MCF 10A (cell line): ENCODE measurements at regions of chr12 and their contacts with region 1.

Region 1: GRCh38 chr12:93766796-93767523 is 89.8 kb downstream of the CRADD start:
- DNase-seq: peak; percentile 77
- H3K4me3 Mint-ChIP-seq: no peak overlapping the region
- H3K27ac Mint-ChIP-seq: no peak overlapping the region
- H3K4me1 Mint-ChIP-seq: peaks cover 26% of the 10 kb centered on the region
- H3K27me3 Mint-ChIP-seq: no peaks in the 10 kb centered on the region
- CTCF ChIP-seq: peak; percentile 57

Region 2: DNA sequence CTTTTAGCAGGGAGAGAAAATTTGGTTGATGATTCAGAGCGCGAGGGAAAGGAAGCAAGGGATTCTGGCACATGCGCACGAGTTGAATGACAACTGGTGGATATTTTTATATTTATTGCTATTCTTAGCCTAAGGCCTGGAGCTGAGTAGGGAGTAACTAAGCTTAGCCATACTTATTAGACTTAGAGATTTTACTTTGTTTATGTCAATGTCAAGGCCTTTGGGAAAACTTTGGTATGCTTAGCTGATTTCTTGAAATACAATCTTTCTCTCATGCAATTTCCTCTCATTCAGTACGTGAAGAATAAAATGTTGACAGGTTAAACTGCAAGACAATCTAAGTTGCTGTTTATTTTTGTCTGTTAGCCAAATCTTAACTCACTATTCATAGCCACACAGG is 11.3 kb after region 1 on chr12:
- CTCF ChIA-PET with region 1: interaction called, 11 read pairs
- POLR2A ChIA-PET with region 1: interaction called, 6 read pairs
- intact Hi-C with region 1: no loop called
- DNase-seq: peak; percentile 47
- H3K4me3 Mint-ChIP-seq: no peak overlapping the region
- H3K27ac Mint-ChIP-seq: no peak overlapping the region
- H3K4me1 Mint-ChIP-seq: peaks cover 19% of the 10 kb centered on the region
- H3K27me3 Mint-ChIP-seq: no peaks in the 10 kb centered on the region
- CTCF ChIP-seq: no peak

Region 3: GRCh38 chr12:93979189-93979588 is 212.2 kb after region 1 on chr12:
- CTCF ChIA-PET with region 1: interaction called, 5 read pairs
- POLR2A ChIA-PET with region 1: interaction called, 5 read pairs
- intact Hi-C with region 1: loop called (anchors 1 kb)
- DNase-seq: peak; percentile 56
- H3K4me3 Mint-ChIP-seq: no peak overlapping the region
- H3K27ac Mint-ChIP-seq: peak overlapping the region; percentile 75
- H3K4me1 Mint-ChIP-seq: peaks cover 39% of the 10 kb centered on the region
- H3K27me3 Mint-ChIP-seq: no peaks in the 10 kb centered on the region
- CTCF ChIP-seq: peak; percentile 36